Tibial artery (tissue), 4 donors: ENCODE measurements at regions of chr19 and their contacts with region 1.

Region 1: GRCh38 chr19:15379083-15379995 is at the start of gene AKAP8:
- DNase-seq: peak; percentile 97 to 99
- H3K4me3 ChIP-seq: peak within 1 kb of the TSS; percentile 72 to 87
- H3K27ac ChIP-seq: peak within 1 kb of the TSS; percentile 97
- H3K4me1 ChIP-seq: peaks cover 0 to 48% (median 47%) of the 10 kb centered on the region in 4 donors
- H3K27me3 ChIP-seq: no peaks in the 10 kb centered on the region
- CTCF ChIP-seq: no peak

Region 2: GRCh38 chr19:15264061-15264932 is 115.0 kb before region 1 on chr19:
- intact Hi-C with region 1: loop called (anchors 5 kb)
- DNase-seq: peak; percentile 78 to 87
- H3K4me3 ChIP-seq: no peak overlapping the region
- H3K27ac ChIP-seq: peak overlapping the region; percentile 67 to 79
- H3K4me1 ChIP-seq: peaks cover 13 to 64% (median 57%) of the 10 kb centered on the region in 4 donors
- H3K27me3 ChIP-seq: no peaks in the 10 kb centered on the region
- CTCF ChIP-seq: peak; percentile 78 to 87